ENCODE measurements at regions of chr15 and their contacts with region 1.

Region 1: GRCh38 chr15:25670025-25670554 is 193.0 kb downstream of the ATP10A start:
- DNase-seq: peak; percentile 91

Region 2: GRCh38 chr15:25543196-25543595 is 126.9 kb before region 1 on chr15:
- intact Hi-C with region 1: loop called (anchors 5 kb)
- DNase-seq: no peak

Region 3: DNA sequence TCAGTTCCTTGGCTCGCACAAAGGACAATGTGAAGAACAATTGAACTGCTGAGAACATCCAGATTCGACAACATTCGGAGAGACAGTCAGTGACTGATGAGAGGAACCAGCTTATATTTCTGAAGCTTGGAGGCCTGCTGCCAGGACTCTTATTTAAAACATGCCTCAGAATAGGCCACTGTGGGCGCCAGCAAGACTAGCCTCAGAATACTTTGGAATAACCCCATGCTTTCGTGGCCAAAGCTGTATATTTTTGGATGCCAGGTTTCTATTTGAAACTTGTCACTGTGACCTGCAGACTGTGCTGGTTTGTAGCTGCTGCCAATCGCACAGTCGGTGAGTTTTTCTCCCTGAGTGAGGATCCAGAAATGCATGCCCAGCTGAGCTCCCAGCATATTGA is 101.3 kb before region 1 on chr15:
- intact Hi-C with region 1: loop called (anchors 5 kb)
- DNase-seq: no peak